Head of caudate nucleus (tissue), 42 donors: ENCODE measurements at regions of chr5 and their contacts with region 1.

Region 1: GRCh38 chr5:173625696-173626504 is 9.4 kb upstream of the BOD1 start:
- DNase-seq: peak in 4 of 42 donors; percentile 14 to 57 (median 28)

Region 2: GRCh38 chr5:173057062-173057924 is 568.6 kb before region 1 on chr5:
- intact Hi-C with region 1: no loop called
- DNase-seq: peak; percentile 93 to 99 (median 98)

Region 3: GRCh38 chr5:173153842-173154241 is 472.1 kb before region 1 on chr5:
- intact Hi-C with region 1: no loop called
- DNase-seq: no peak

Region 4: GRCh38 chr5:173671121-173671949 is 45.4 kb after region 1 on chr5:
- intact Hi-C with region 1: loop called (anchors 2 kb)
- DNase-seq: peak; percentile 72 to 96 (median 86)

Region 5: GRCh38 chr5:173764321-173765029 is 138.6 kb after region 1 on chr5:
- intact Hi-C with region 1: loop called (anchors 10 kb)
- DNase-seq: peak in 29 of 42 donors; percentile 27 to 90 (median 53)